CD8-positive, alpha-beta memory T cell (primary cell): ENCODE measurements at regions of chr9 and their contacts with region 1.

Region 1: DNA sequence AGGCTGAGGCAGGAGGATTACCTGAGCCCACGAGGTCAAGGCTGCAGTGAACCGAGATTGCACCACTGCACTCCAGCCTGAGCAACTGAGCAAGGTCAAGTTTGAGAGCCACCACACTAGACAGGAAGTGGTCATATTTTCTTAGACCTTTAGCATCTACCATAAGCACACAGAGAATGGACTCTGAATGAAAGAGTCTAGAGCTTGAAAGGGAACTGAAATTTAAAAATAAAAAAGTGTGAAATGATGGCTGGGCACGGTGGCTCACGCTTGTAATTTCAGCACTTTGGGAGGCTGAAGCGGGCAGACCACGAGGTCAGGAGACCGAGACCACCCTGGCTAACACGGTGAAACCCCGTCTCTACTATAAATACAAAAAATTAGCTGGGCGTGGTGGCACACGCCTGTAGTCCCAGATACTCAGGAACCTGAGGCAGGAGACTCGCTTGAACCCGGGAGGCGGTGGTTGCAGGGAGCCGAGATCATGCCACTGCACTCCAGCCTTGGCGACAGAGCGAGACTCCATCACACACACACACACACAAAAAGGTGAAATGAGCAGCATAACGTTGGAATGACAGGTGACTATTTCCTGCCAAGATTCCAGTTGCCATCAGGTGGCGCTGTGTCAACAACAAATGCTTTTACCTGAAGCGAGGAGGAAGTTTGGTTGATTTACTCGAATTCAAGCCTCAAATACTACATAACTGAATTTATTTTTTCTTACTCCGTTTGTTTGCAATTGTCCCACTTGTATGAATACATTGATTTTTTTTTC is 21.3 kb upstream of the AK3 start:
- DNase-seq: peak; percentile 60 to 84 (median 68)
- H3K4me3 ChIP-seq: no peak overlapping the region
- H3K4me3 Mint-ChIP-seq: peak overlapping the region in 5 of 7 donors; percentile 22 to 87 (median 27)
- H3K27ac ChIP-seq: no peak overlapping the region
- H3K27ac Mint-ChIP-seq: peak overlapping the region in 3 of 8 donors; percentile 17 to 51 (median 30)
- H3K4me1 ChIP-seq: no peaks in the 10 kb centered on the region
- H3K4me1 Mint-ChIP-seq: peaks cover 8 to 11% (median 10%) of the 10 kb centered on the region in 3 donors
- H3K27me3 ChIP-seq: no peaks in the 10 kb centered on the region
- H3K27me3 Mint-ChIP-seq: peaks cover 0 to 9% of the 10 kb centered on the region in 2 donors

Region 2: GRCh38 chr9:4740638-4741364 is 21.5 kb before region 1 on chr9 and contains the start of gene AK3:
- CTCF ChIA-PET with region 1: interaction called, 35 read pairs
- POLR2A ChIA-PET with region 1: no interaction called
- DNase-seq: peak; percentile 85 to 92 (median 87)
- H3K4me3 ChIP-seq: peak within 1 kb of the TSS; percentile 86
- H3K4me3 Mint-ChIP-seq: peak within 1 kb of the TSS; percentile 85 to 100 (median 94)
- H3K27ac ChIP-seq: peak within 1 kb of the TSS; percentile 79
- H3K27ac Mint-ChIP-seq: peak within 1 kb of the TSS; percentile 86 to 99 (median 92)
- H3K4me1 ChIP-seq: peaks cover 25% of the 10 kb centered on the region
- H3K4me1 Mint-ChIP-seq: peaks cover 30 to 50% (median 43%) of the 10 kb centered on the region in 3 donors
- H3K27me3 ChIP-seq: no peaks in the 10 kb centered on the region
- H3K27me3 Mint-ChIP-seq: no peaks in the 10 kb centered on the region
- total RNA-seq, gene AK3: 25.3 to 29.8 TPM

Region 3: DNA sequence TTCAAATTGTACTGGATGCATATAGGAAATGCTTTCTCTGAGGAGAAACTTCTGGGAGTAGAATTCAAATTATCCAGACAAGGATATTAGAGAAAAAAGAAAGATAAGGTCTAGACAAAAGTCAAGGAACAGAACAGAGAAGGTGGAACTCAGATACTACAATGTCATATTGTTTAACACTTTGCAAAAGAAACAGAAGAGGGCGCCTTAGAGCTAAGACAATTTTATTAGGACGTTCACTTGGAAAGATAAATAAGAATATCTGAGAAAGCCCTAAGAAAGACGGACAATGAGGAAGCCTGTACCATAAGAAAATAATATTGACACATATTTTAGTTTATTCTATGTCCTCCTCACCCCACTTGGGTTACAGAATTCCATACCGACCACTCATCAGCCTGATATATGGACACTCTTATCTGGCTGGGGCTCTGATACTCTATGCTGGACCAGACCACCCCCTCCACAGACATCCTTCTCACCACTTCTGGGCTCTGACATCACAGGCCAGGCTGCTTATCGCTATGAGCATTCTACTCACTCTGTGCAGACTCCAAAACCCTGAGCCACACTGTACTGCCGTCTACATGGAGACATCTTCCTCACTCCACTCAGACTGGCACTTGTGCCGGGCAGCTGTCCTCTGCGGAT is 12.1 kb before region 1 on chr9:
- CTCF ChIA-PET with region 1: interaction called, 20 read pairs
- POLR2A ChIA-PET with region 1: no interaction called
- DNase-seq: peak in 2 of 5 donors; percentile 11 to 18
- H3K4me3 ChIP-seq: no peak overlapping the region
- H3K4me3 Mint-ChIP-seq: no peak overlapping the region
- H3K27ac ChIP-seq: no peak overlapping the region
- H3K27ac Mint-ChIP-seq: no peak overlapping the region
- H3K4me1 ChIP-seq: no peaks in the 10 kb centered on the region
- H3K4me1 Mint-ChIP-seq: peaks cover 0 to 5% (median 3%) of the 10 kb centered on the region in 3 donors
- H3K27me3 ChIP-seq: no peaks in the 10 kb centered on the region
- H3K27me3 Mint-ChIP-seq: peaks cover 10% of the 10 kb centered on the region in 2 donors

Region 4: GRCh38 chr9:4792572-4793458 is 30.5 kb after region 1 on chr9 and contains the start of gene RCL1:
- CTCF ChIA-PET with region 1: interaction called, 18 read pairs
- POLR2A ChIA-PET with region 1: interaction called, 3 read pairs
- DNase-seq: peak; percentile 93 to 97 (median 96)
- H3K4me3 ChIP-seq: peak within 1 kb of the TSS; percentile 82
- H3K4me3 Mint-ChIP-seq: peak within 1 kb of the TSS; percentile 92 to 96 (median 95)
- H3K27ac ChIP-seq: peak within 1 kb of the TSS; percentile 92
- H3K27ac Mint-ChIP-seq: peak within 1 kb of the TSS; percentile 94 to 99 (median 95)
- H3K4me1 ChIP-seq: peaks cover 20% of the 10 kb centered on the region
- H3K4me1 Mint-ChIP-seq: peaks cover 21 to 53% (median 48%) of the 10 kb centered on the region in 3 donors
- H3K27me3 ChIP-seq: no peaks in the 10 kb centered on the region
- H3K27me3 Mint-ChIP-seq: peaks cover 1 to 2% of the 10 kb centered on the region in 2 donors
- total RNA-seq, gene RCL1: 36.5 to 39.1 TPM

Region 5: GRCh38 chr9:4805191-4805918 is 43.1 kb after region 1 on chr9:
- CTCF ChIA-PET with region 1: no interaction called
- POLR2A ChIA-PET with region 1: no interaction called
- DNase-seq: no peak
- H3K4me3 ChIP-seq: no peak overlapping the region
- H3K4me3 Mint-ChIP-seq: peak overlapping the region in 1 of 7 donors; percentile 30
- H3K27ac ChIP-seq: no peak overlapping the region
- H3K27ac Mint-ChIP-seq: no peak overlapping the region
- H3K4me1 ChIP-seq: no peaks in the 10 kb centered on the region
- H3K4me1 Mint-ChIP-seq: peaks cover 22 to 48% (median 43%) of the 10 kb centered on the region in 3 donors
- H3K27me3 ChIP-seq: no peaks in the 10 kb centered on the region
- H3K27me3 Mint-ChIP-seq: peaks cover 0 to 1% of the 10 kb centered on the region in 2 donors

Region 6: GRCh38 chr9:4855841-4856240 is 93.5 kb after region 1 on chr9:
- CTCF ChIA-PET with region 1: no interaction called
- POLR2A ChIA-PET with region 1: no interaction called
- DNase-seq: no peak
- H3K4me3 ChIP-seq: no peak overlapping the region
- H3K4me3 Mint-ChIP-seq: no peak overlapping the region
- H3K27ac ChIP-seq: peak overlapping the region; percentile 69
- H3K27ac Mint-ChIP-seq: peak overlapping the region in 1 of 8 donors; percentile 43
- H3K4me1 ChIP-seq: no peaks in the 10 kb centered on the region
- H3K4me1 Mint-ChIP-seq: peaks cover 4 to 15% (median 6%) of the 10 kb centered on the region in 3 donors
- H3K27me3 ChIP-seq: no peaks in the 10 kb centered on the region
- H3K27me3 Mint-ChIP-seq: no peaks in the 10 kb centered on the region

Region 7: DNA sequence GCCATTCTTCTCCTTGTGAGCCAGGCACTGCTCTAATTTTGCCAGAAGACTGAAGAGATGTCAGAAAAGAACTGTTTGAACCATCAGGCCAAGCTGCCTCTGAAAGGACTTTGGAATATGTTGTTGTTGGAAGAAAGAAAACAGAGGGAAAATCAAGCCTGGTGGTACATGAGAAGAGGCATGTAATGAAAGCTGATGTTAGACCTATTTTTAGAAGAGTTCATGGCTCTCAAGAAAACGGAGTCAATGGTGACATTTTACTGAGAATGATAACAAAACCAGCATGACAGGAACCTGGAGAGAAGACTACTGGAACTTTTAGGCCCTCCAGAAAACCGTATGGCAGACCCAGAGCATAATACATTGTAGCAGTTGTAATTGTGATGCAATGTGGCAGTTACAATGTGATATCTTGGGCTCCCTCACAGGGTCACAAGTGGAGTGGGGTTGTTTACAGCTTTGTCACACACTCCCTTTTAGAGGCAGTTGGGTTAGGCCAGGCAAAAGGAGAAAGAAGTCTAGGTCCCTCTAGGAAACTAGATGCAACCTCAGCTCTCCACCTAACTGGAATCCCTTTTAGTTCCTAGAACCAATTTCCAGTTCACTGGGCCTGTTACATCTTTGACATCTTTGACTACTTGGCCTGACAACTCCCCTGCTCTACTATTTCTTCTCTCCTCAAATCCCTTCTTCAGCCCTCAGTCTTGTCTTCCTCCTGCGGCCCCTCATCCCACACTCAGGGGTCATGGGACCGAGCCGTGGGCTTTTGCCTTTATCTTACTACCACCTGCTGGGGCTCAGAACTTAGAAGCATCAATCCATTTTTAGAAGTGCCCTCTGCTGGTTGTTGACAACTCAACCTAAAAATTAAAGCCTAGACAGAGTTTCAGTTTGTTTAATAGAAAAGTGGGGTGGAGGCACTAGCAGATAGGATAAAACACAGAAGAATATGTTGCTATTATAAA is 161.6 kb after region 1 on chr9:
- CTCF ChIA-PET with region 1: interaction called, 14 read pairs
- POLR2A ChIA-PET with region 1: no interaction called
- DNase-seq: peak in 2 of 5 donors; percentile 8 to 21
- H3K4me3 ChIP-seq: no peak overlapping the region
- H3K4me3 Mint-ChIP-seq: no peak overlapping the region
- H3K27ac ChIP-seq: no peak overlapping the region
- H3K27ac Mint-ChIP-seq: peak overlapping the region in 1 of 8 donors; percentile 39
- H3K4me1 ChIP-seq: no peaks in the 10 kb centered on the region
- H3K4me1 Mint-ChIP-seq: peaks cover 0 to 7% (median 3%) of the 10 kb centered on the region in 3 donors
- H3K27me3 ChIP-seq: no peaks in the 10 kb centered on the region
- H3K27me3 Mint-ChIP-seq: peaks cover 0 to 2% of the 10 kb centered on the region in 2 donors

Region 8: DNA sequence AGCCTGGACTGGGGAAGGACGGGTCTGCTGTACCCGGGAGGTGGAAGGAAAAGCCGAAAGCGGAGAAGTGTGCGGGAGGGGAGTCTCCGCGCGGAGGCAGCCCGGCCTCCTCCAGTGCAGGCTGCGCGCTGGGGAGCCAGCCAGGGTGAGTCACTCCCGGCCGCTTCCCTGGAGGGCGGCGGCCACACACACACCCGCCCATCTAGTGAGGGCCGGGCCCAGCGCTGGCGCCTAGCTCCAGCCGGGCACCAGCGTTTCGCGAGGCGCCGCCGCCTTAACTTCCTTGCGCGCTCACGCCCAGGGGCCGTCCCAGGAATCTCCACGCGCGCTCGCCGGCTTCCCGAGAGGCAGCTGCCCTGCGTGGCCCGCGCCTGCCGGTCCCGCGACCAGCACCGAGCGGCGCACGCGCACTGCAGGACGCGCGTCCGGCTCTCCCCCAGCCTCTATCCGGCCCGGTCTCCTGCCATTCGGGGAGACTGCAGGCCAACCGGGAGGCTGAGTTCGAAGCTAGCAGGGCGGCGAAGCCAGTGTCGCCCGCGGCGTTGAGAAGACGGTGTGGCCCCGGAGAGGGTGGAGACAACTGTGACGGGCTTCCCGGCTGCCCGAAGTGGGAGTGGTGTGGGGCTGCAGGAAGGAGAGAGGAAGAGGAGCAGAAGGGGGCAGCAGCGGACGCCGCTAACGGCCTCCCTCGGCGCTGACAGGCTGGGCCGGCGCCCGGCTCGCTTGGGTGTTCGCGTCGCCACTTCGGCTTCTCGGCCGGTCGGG is 222.5 kb after region 1 on chr9 and contains the start of gene JAK2:
- CTCF ChIA-PET with region 1: interaction called, 93 read pairs
- POLR2A ChIA-PET with region 1: no interaction called
- DNase-seq: peak; percentile 74 to 88 (median 78)
- H3K4me3 ChIP-seq: peak within 1 kb of the TSS; percentile 44
- H3K4me3 Mint-ChIP-seq: peak within 1 kb of the TSS; percentile 88 to 93 (median 92)
- H3K27ac ChIP-seq: peak within 1 kb of the TSS; percentile 74
- H3K27ac Mint-ChIP-seq: peak within 1 kb of the TSS; percentile 81 to 96 (median 90)
- H3K4me1 ChIP-seq: peaks cover 34% of the 10 kb centered on the region
- H3K4me1 Mint-ChIP-seq: peaks cover 27 to 34% (median 28%) of the 10 kb centered on the region in 3 donors
- H3K27me3 ChIP-seq: no peaks in the 10 kb centered on the region
- H3K27me3 Mint-ChIP-seq: no peaks in the 10 kb centered on the region
- total RNA-seq, gene JAK2: 24.9 to 25.1 TPM